ENCODE measurements at regions of chr1 and their contacts with region 1.

Region 1: DNA sequence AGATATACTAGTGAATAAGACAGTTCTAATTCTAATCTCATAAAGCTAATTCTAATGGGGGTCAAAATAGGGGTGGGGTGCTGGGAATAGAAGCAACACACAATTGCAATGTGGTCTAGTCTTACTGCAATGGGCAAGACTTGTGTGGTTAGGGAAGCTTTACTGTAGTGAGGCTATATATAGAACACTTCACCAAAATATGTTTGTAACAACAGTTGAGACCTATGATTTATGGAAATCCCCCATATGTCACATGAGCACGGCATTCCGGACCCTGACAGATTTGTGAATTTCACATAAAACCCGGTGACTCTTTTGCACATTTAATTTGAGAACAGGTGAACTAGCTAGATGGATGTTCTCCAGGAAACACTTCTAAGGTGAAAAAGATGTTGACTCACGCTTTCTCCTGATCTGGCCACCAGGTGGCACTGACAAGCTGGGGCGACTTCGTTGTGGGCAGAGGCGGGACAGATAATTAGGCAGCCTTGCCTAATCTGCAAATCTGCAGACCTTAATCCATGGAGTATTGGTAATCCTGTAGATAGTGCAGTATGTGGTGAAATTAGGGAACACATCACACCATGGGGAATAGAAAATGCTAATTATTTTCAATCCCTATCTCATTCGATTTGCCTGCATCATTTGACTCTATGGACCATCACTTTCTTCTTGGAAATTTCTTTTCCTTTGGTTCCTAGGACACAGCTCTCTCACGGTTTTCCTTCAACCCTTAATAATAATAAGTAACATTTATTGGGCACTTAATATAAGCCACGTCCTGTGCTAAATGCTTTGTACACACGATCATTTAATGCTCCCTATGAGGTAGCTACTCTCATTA is 37.7 kb downstream of the KIAA0040 start:
- DNase-seq: peak; percentile 69
- H3K4me3 ChIP-seq: no peak overlapping the region
- H3K27ac ChIP-seq: peak overlapping the region; percentile 12
- H3K4me1 ChIP-seq: peaks cover 14% of the 10 kb centered on the region
- H3K27me3 ChIP-seq: peaks cover 17% of the 10 kb centered on the region
- CTCF ChIP-seq: peak; percentile 94

Region 2: DNA sequence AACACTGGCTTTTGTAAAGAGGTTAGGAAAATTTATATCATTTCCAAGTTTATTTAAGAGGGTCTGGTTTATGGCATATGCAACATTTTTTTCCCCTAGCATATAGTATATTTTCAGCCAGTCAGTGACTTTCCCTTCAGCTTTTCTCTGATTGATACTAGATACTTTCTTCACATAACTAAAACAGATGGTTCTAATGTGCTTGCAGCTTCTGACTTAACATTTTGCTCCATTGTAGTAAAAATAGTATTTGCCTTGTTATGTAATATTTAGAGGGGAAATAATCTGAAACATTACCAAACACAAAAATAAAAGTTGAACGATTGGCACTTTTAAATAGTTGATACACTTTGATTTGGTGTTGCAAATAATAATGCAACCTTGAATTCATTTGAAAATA is 515.4 kb before region 1 on chr1:
- intact Hi-C with region 1: no loop called
- DNase-seq: no peak
- H3K4me3 ChIP-seq: no peak overlapping the region
- H3K27ac ChIP-seq: no peak overlapping the region
- H3K4me1 ChIP-seq: no peaks in the 10 kb centered on the region
- H3K27me3 ChIP-seq: no peaks in the 10 kb centered on the region
- CTCF ChIP-seq: no peak

Region 3: GRCh38 chr1:175075572-175076568 is 79.0 kb before region 1 on chr1:
- intact Hi-C with region 1: no loop called
- DNase-seq: no peak
- H3K4me3 ChIP-seq: no peak overlapping the region
- H3K27ac ChIP-seq: no peak overlapping the region
- H3K4me1 ChIP-seq: peaks cover 24% of the 10 kb centered on the region
- H3K27me3 ChIP-seq: peaks cover 56% of the 10 kb centered on the region
- CTCF ChIP-seq: no peak

Region 4: DNA sequence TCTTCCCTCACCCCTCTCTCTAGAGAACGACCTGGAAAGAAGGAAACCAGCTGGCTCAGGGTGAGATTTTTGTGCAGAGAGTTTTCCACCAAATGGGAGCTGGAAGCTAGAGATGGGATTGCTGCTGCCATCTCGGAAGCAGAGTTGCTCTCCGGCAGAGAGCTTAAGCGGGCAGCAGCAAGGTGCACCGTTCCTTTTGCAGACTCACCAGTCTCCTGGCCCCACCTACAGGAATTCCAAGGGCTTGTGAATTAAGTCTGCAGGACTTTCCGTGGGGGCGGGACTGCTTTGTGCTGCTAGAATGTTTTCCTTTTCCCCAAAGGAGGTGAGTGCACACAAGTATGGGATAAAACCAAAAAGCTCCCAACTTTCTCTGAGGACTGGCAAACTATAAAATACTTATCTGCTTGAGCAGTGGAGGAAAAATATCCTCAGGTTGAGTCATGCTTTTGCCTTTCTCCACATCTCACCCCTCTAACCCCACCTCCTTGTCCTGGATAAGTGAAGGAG is 66.9 kb after region 1 on chr1:
- intact Hi-C with region 1: loop called (anchors 10 kb)
- DNase-seq: peak; percentile 40
- H3K4me3 ChIP-seq: no peak overlapping the region
- H3K27ac ChIP-seq: peak overlapping the region; percentile 69
- H3K4me1 ChIP-seq: peaks cover 43% of the 10 kb centered on the region
- H3K27me3 ChIP-seq: no peaks in the 10 kb centered on the region
- CTCF ChIP-seq: peak; percentile 49

Region 5: GRCh38 chr1:175319418-175320230 is 164.8 kb after region 1 on chr1:
- intact Hi-C with region 1: loop called (anchors 2 kb)
- DNase-seq: peak; percentile 73
- H3K4me3 ChIP-seq: no peak overlapping the region
- H3K27ac ChIP-seq: peak overlapping the region; percentile 80
- H3K4me1 ChIP-seq: peaks cover 29% of the 10 kb centered on the region
- H3K27me3 ChIP-seq: no peaks in the 10 kb centered on the region
- CTCF ChIP-seq: peak; percentile 90